WTC11 (cell line): ENCODE measurements at regions of chr6 and their contacts with region 1.

Region 1: GRCh38 chr6:109783250-109783986 is 92.3 kb downstream of the FIG4 start:
- DNase-seq: peak; percentile 51
- ATAC-seq: peak; percentile 95
- H3K4me3 Mint-ChIP-seq: no peak overlapping the region
- H3K27ac Mint-ChIP-seq: peak overlapping the region; percentile 8; the same call in 1 of the 2 replicates
- H3K4me1 Mint-ChIP-seq: peaks cover 5% of the 10 kb centered on the region; the same call in 1 of the 2 replicates
- H3K27me3 Mint-ChIP-seq: no peaks in the 10 kb centered on the region
- CTCF ChIP-seq: peak; percentile 39; the same call in 1 of the 2 replicates

Region 2: GRCh38 chr6:109526905-109527628 is 256.4 kb before region 1 on chr6:
- CTCF ChIA-PET with region 1: interaction called, 10 read pairs
- POLR2A ChIA-PET with region 1: no interaction called
- DNase-seq: peak; percentile 58
- ATAC-seq: peak; percentile 99
- H3K4me3 Mint-ChIP-seq: no peak overlapping the region
- H3K27ac Mint-ChIP-seq: no peak overlapping the region
- H3K4me1 Mint-ChIP-seq: peaks cover 12% of the 10 kb centered on the region
- H3K27me3 Mint-ChIP-seq: no peaks in the 10 kb centered on the region; the same call in 1 of the 2 replicates
- CTCF ChIP-seq: peak; percentile 35; the same call in 1 of the 2 replicates

Region 3: DNA sequence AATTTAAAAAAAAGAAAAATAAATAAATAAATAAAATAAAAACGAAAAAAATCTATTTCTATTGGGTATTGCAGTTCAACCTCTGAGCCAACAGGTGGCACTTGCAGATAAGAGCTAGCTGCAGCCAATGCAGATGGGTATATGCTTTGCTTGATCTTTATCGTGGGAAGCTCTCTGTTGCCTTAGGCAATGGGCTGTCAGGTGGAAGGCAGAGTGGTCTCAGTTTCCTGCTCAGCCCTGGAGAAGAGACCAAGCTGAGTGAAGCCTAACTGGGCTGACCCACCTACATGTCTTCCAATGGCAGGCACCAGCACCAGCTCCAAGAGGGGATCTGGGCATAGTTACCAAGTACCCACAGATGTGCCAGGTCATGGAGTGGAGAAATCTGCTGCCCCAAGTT is 187.4 kb before region 1 on chr6:
- CTCF ChIA-PET with region 1: interaction called, 12 read pairs
- POLR2A ChIA-PET with region 1: no interaction called
- DNase-seq: peak; percentile 20
- ATAC-seq: peak; percentile 83
- H3K4me3 Mint-ChIP-seq: no peak overlapping the region
- H3K27ac Mint-ChIP-seq: no peak overlapping the region
- H3K4me1 Mint-ChIP-seq: no peaks in the 10 kb centered on the region
- H3K27me3 Mint-ChIP-seq: peaks cover under 1% of the 10 kb centered on the region
- CTCF ChIP-seq: peak; percentile 31

Region 4: GRCh38 chr6:109705258-109705657 is 78.2 kb before region 1 on chr6:
- CTCF ChIA-PET with region 1: interaction called, 21 read pairs
- POLR2A ChIA-PET with region 1: no interaction called
- DNase-seq: peak; percentile 81
- ATAC-seq: peak; percentile 91
- H3K4me3 Mint-ChIP-seq: no peak overlapping the region
- H3K27ac Mint-ChIP-seq: peak overlapping the region; percentile 35; the same call in 1 of the 2 replicates
- H3K4me1 Mint-ChIP-seq: peaks cover 41% of the 10 kb centered on the region
- H3K27me3 Mint-ChIP-seq: no peaks in the 10 kb centered on the region
- CTCF ChIP-seq: peak; percentile 87

Region 5: GRCh38 chr6:109736273-109737025 is 47.0 kb before region 1 on chr6:
- CTCF ChIA-PET with region 1: interaction called, 10 read pairs
- POLR2A ChIA-PET with region 1: no interaction called
- DNase-seq: no peak
- ATAC-seq: peak; percentile 96
- H3K4me3 Mint-ChIP-seq: peak overlapping the region; percentile 1; the same call in 1 of the 2 replicates
- H3K27ac Mint-ChIP-seq: peak overlapping the region; percentile 68; the same call in 1 of the 2 replicates
- H3K4me1 Mint-ChIP-seq: peaks cover 38% of the 10 kb centered on the region
- H3K27me3 Mint-ChIP-seq: no peaks in the 10 kb centered on the region
- CTCF ChIP-seq: no peak

Region 6: DNA sequence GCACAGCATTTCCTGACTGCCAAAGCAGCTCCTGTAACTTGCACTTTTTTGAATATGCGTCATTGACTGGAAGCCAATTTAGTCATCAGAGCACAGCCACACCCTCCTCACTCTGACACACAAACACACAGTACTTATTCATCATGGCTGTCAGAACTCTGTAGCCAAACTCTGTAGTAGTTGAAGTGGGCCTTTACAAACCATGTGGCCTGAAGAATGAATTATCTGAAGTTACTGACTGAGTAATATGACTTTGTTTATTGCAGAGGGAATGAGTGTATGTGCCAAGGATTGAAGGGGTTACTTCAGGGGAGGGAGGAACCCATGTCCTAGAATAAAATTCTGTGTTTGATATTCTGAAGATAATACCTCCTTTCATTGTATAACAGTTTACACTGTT is 10.4 kb after region 1 on chr6:
- CTCF ChIA-PET with region 1: interaction called, 14 read pairs
- POLR2A ChIA-PET with region 1: no interaction called
- DNase-seq: no peak
- ATAC-seq: no peak
- H3K4me3 Mint-ChIP-seq: no peak overlapping the region
- H3K27ac Mint-ChIP-seq: no peak overlapping the region
- H3K4me1 Mint-ChIP-seq: peaks cover 39% of the 10 kb centered on the region
- H3K27me3 Mint-ChIP-seq: no peaks in the 10 kb centered on the region
- CTCF ChIP-seq: no peak